Esophagus squamous epithelium (tissue), 5 donors: ENCODE measurements at regions of chr5 and their contacts with region 1.

Region 1: DNA sequence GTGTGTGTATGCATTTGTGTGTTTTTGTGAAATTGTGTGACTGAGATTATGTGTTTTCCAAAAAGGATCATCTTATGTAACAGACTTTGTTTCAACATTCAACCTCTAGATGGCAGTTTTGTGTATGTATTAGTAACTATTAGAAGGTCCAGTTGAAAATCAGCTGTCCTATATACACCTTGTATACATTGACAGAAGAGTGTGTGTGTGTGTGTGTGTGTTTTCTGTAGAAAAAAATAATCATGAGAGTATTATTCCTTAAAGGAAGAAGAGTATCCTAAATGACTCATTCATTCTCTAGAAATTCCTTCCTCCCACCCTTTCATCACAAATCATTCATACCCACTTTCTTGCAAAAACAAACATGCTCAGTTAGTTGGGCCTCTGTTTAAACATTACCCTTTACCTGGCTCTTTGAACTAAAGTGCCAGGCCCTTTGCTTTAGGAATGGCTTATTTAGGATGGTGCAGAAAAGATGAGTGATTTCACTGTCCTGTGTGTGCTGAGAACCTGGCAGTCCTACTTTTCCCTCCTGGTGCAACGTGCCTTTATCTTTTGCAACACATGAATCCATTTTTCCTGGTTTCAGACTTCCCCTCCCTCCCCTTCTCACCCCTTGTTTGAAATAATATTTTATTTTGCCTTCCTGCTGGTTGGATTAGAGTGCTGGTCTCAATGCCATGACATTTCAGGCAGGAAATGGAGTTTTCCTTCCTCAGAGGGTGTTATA is 152.2 kb downstream of the ARHGAP26 start:
- DNase-seq: no peak
- H3K4me3 ChIP-seq: no peak overlapping the region
- H3K27ac ChIP-seq: no peak overlapping the region
- H3K4me1 ChIP-seq: peaks cover 0 to 25% (median 7%) of the 10 kb centered on the region in 3 donors
- H3K27me3 ChIP-seq: no peaks in the 10 kb centered on the region
- CTCF ChIP-seq: peak; percentile 12 to 64 (median 43)
- POLR2A ChIP-seq: no peak

Region 2: DNA sequence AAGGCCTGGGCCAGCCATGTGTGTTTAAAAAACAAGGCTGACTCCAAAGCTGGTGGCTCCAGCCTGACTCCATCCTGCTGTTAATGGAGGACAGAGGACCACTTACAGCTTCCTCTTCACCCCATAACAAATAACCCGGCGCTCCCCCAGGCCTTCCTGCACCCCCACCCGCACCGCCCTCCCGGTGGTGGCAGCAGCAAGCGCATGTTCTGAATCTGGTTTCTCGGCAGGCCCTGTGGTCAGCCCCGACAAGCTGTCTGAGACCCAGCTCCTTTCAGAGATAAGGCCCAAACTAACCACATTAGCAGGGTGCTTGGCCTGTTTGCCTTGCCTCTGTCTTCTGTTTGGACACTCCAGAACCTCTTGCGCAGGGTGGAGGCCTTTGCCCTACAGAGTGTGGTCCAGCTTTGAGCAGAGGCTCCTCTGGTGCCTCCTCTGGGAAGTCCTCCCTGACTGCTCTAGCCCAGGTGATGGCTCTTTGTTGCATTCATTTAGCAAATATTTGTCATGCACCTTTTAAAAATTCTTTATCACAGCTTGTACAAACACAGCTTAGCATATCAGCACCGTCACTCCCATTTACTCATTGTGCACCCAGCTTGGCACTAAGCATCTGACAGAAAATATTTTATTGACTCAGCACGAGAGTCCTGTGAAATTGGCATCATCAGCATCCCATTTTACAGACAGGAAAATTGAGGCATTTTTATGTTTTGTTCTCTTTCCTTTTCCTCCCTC is 735.4 kb before region 1 on chr5:
- intact Hi-C with region 1: no loop called
- DNase-seq: no peak
- H3K4me3 ChIP-seq: no peak overlapping the region
- H3K27ac ChIP-seq: no peak overlapping the region
- H3K4me1 ChIP-seq: no peaks in the 10 kb centered on the region
- H3K27me3 ChIP-seq: peaks cover 0 to 8% (median 0%) of the 10 kb centered on the region in 4 donors
- CTCF ChIP-seq: no peak
- POLR2A ChIP-seq: no peak

Region 3: DNA sequence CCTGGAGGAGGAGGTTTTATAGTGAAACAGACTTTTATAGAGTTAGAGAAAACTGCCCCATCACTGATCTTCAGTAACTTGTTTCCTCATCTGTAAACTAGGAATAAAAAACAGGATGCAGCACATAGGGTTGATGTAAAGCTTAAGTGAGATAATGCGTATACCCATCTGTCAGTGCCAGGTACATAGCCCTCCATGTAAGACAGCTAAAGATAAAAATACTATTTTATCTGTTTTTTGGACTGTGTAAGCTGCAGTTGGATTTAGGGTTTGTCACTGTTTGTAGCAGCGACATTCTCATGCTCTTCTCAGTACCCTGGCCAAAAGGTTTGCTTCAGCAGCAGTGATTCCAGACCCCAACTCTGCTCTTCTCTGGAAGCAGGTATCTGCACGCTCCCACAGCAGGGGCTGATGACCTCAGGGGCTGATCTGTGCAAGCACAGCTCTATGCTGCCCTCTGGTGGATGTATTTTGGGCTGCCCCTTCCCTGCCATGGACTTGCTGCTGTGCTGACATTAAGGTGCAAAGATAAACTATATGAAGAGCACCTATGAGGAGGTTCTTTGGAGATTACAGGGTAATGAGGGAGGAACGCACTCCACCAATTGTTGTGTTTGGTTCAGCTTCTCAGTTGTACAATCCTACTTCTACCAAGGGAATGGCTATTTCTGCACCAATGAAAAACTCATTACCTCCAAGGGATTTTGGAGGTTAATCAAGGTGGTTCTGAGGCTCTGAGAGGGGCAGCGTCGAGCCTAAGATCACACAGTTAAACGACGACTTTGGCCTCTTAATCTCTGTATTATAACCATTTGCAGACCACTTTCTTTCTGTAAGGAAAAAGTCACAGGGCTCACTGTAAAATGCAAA is 902.7 kb after region 1 on chr5:
- intact Hi-C with region 1: loop called (anchors 10 kb)
- DNase-seq: peak; percentile 3
- H3K4me3 ChIP-seq: no peak overlapping the region
- H3K27ac ChIP-seq: no peak overlapping the region
- H3K4me1 ChIP-seq: peaks cover 0 to 8% (median 0%) of the 10 kb centered on the region in 3 donors
- H3K27me3 ChIP-seq: no peaks in the 10 kb centered on the region
- CTCF ChIP-seq: peak; percentile 91 to 97 (median 94)
- POLR2A ChIP-seq: no peak